ENCODE measurements at regions of chr14 and their contacts with region 1.

Region 1: DNA sequence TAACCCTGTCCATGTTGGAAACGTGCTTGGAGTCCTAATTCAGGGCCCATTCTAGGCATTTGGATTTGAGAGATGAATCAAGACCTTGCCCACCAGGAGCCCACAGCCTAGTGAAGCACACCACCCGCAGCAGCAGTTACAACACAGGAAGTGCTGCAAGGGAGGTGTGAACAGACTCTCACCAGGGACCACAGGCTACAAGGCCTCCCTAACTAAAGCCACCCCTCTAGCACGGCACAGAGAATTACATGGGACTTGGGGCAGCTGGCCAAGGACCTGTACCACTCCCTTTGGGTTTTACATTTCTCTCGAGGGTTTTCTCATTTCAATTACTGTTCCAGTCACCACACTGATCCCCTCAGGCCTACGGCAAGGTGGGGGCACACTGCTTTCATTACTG is 49.5 kb upstream of the FOXN3 start:
- DNase-seq: no peak
- ATAC-seq: peak; percentile 57
- H3K4me3 Mint-ChIP-seq: no peak overlapping the region
- H3K27ac Mint-ChIP-seq: peak overlapping the region; percentile 50
- H3K4me1 Mint-ChIP-seq: peaks cover 42% of the 10 kb centered on the region
- H3K27me3 Mint-ChIP-seq: no peaks in the 10 kb centered on the region
- CTCF ChIP-seq: no peak

Region 2: GRCh38 chr14:89445273-89445973 is 21.1 kb before region 1 on chr14:
- CTCF ChIA-PET with region 1: interaction called, 3 read pairs
- POLR2A ChIA-PET with region 1: interaction called, 10 read pairs
- intact Hi-C with region 1: loop called (anchors 1 kb)
- DNase-seq: no peak
- ATAC-seq: peak; percentile 65
- H3K4me3 Mint-ChIP-seq: peak overlapping the region; percentile 55
- H3K27ac Mint-ChIP-seq: peak overlapping the region; percentile 85
- H3K4me1 Mint-ChIP-seq: peaks cover 78% of the 10 kb centered on the region
- H3K27me3 Mint-ChIP-seq: no peaks in the 10 kb centered on the region
- CTCF ChIP-seq: no peak

Region 3: GRCh38 chr14:89509891-89510290 is 43.4 kb after region 1 on chr14:
- CTCF ChIA-PET with region 1: no interaction called
- POLR2A ChIA-PET with region 1: interaction called, 3 read pairs
- intact Hi-C with region 1: loop called (anchors 2 kb)
- DNase-seq: no peak
- ATAC-seq: no peak
- H3K4me3 Mint-ChIP-seq: peak overlapping the region; percentile 81
- H3K27ac Mint-ChIP-seq: peak overlapping the region; percentile 93
- H3K4me1 Mint-ChIP-seq: peaks cover 42% of the 10 kb centered on the region
- H3K27me3 Mint-ChIP-seq: no peaks in the 10 kb centered on the region
- CTCF ChIP-seq: no peak

Region 4: DNA sequence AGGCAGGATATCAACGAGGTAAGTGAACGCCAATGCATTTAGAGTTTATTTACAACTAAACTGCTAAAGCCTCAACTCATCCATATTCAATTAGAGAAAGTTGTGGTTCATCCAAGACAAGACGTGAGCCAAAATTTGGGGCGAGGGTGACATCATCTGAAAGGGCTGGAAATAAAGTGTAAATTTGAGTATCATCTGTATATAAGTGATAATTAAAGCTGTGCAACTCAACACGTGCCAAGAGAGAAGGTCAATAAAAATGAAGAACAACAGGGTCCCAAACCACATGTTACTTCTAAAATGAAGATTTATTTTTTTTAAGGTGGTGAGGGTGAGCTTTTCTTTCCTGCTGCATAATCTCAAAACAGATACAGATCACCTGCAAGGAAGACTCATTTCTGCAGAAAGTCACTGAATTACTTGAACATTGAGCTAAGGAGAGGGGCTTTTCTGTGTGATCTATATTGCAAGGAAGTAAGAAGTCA is 284.5 kb after region 1 on chr14:
- CTCF ChIA-PET with region 1: no interaction called
- POLR2A ChIA-PET with region 1: interaction called, 10 read pairs
- intact Hi-C with region 1: no loop called
- DNase-seq: no peak
- ATAC-seq: no peak
- H3K4me3 Mint-ChIP-seq: no peak overlapping the region
- H3K27ac Mint-ChIP-seq: no peak overlapping the region
- H3K4me1 Mint-ChIP-seq: no peaks in the 10 kb centered on the region
- H3K27me3 Mint-ChIP-seq: no peaks in the 10 kb centered on the region
- CTCF ChIP-seq: no peak

Region 5: GRCh38 chr14:90444036-90444696 is 977.7 kb after region 1 on chr14:
- CTCF ChIA-PET with region 1: no interaction called
- POLR2A ChIA-PET with region 1: no interaction called
- intact Hi-C with region 1: no loop called
- DNase-seq: no peak
- ATAC-seq: no peak
- H3K4me3 Mint-ChIP-seq: no peak overlapping the region
- H3K27ac Mint-ChIP-seq: no peak overlapping the region
- H3K4me1 Mint-ChIP-seq: no peaks in the 10 kb centered on the region
- H3K27me3 Mint-ChIP-seq: peaks cover 9% of the 10 kb centered on the region
- CTCF ChIP-seq: no peak

Measured in activated B cell treated with CpG ODN at 0.5 μM for 24 hours (primary cell).